CD4-positive, alpha-beta T cell (primary cell): ENCODE measurements at regions of chr16 and their contacts with region 1.

Region 1: GRCh38 chr16:9090960-9091866 is at the start of gene HAPSTR1:
- DNase-seq: peak; percentile 98 to 100 (median 99)
- ATAC-seq: peak; percentile 87
- H3K4me3 ChIP-seq: peak within 1 kb of the TSS; percentile 89
- H3K4me3 Mint-ChIP-seq: peak within 1 kb of the TSS; percentile 96
- H3K27ac ChIP-seq: peak within 1 kb of the TSS; percentile 86 to 90
- H3K27ac Mint-ChIP-seq: peak within 1 kb of the TSS; percentile 97
- H3K4me1 ChIP-seq: peaks cover 22% of the 10 kb centered on the region
- H3K4me1 Mint-ChIP-seq: peaks cover 47% of the 10 kb centered on the region
- H3K27me3 ChIP-seq: no peaks in the 10 kb centered on the region
- H3K27me3 Mint-ChIP-seq: no peaks in the 10 kb centered on the region
- CTCF ChIP-seq: no peak
- total RNA-seq, gene HAPSTR1: 152 to 153 TPM

Region 2: GRCh38 chr16:8674413-8675022 is 416.7 kb before region 1 on chr16 and contains the start of gene ABAT:
- CTCF ChIA-PET with region 1: no interaction called
- POLR2A ChIA-PET with region 1: interaction called, 5 read pairs
- intact Hi-C with region 1: loop called in 1 of 2 experiments (anchors 1 kb)
- DNase-seq: peak; percentile 78 to 93 (median 86)
- ATAC-seq: peak; percentile 96
- H3K4me3 ChIP-seq: peak within 1 kb of the TSS; percentile 92
- H3K4me3 Mint-ChIP-seq: peak within 1 kb of the TSS; percentile 97
- H3K27ac ChIP-seq: peak within 1 kb of the TSS in 1 of 2 donors; percentile 46
- H3K27ac Mint-ChIP-seq: peak within 1 kb of the TSS; percentile 91
- H3K4me1 ChIP-seq: peaks cover 25% of the 10 kb centered on the region
- H3K4me1 Mint-ChIP-seq: peaks cover 24% of the 10 kb centered on the region
- H3K27me3 ChIP-seq: no peaks in the 10 kb centered on the region
- H3K27me3 Mint-ChIP-seq: no peaks in the 10 kb centered on the region
- CTCF ChIP-seq: no peak
- total RNA-seq, gene ABAT: 4.1 to 4.4 TPM

Region 3: GRCh38 chr16:8868416-8869211 is 222.6 kb before region 1 on chr16 and contains the start of gene CARHSP1:
- CTCF ChIA-PET with region 1: no interaction called
- POLR2A ChIA-PET with region 1: interaction called, 52 read pairs
- intact Hi-C with region 1: loop called in 1 of 2 experiments (anchors 5 kb)
- DNase-seq: peak; percentile 62 to 92 (median 76)
- ATAC-seq: peak; percentile 74
- H3K4me3 ChIP-seq: peak within 1 kb of the TSS; percentile 85
- H3K4me3 Mint-ChIP-seq: peak within 1 kb of the TSS; percentile 95
- H3K27ac ChIP-seq: peak within 1 kb of the TSS; percentile 32 to 72
- H3K27ac Mint-ChIP-seq: peak within 1 kb of the TSS; percentile 85
- H3K4me1 ChIP-seq: peaks cover 59% of the 10 kb centered on the region
- H3K4me1 Mint-ChIP-seq: peaks cover 50% of the 10 kb centered on the region
- H3K27me3 ChIP-seq: no peaks in the 10 kb centered on the region
- H3K27me3 Mint-ChIP-seq: no peaks in the 10 kb centered on the region
- CTCF ChIP-seq: no peak
- total RNA-seq, gene CARHSP1: 25.5 to 27.8 TPM

Region 4: DNA sequence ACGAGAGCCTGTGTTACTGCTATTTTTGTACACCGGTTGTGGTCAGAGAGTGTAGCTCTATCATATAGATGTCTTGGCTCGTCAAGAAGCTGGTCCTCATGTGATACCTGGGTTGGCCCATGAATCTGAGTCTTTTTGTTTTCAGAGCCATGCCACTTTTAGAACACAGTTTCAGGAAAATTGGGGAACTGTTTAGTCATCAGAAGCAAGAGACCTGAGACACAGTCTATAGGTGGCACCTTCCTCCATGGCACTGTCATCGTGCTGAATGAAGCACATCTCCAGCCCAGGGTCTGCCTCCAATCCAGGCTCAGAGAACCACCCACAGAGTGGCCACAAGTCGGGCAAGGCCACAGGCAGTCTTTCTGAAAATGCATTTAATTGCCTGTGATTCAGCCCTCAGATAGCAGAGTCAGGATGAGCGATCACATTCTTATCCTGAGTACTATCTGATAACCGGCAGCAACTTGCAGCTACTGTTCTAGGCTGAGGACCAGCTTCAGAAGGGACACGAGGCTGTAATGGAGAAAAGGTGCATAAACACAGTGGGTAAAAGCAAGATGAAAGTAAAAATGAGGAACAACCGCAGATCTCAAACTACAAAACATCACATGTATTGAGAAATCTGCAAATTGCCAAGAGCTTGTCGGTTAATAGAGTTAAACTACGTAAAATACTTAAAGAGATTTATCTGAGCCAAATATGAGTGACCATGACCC is 14.0 kb before region 1 on chr16:
- CTCF ChIA-PET with region 1: no interaction called
- POLR2A ChIA-PET with region 1: interaction called, 42 read pairs
- intact Hi-C with region 1: no loop called
- DNase-seq: peak in 2 of 14 experiments; percentile 11 to 15
- ATAC-seq: no peak
- H3K4me3 ChIP-seq: no peak overlapping the region
- H3K4me3 Mint-ChIP-seq: no peak overlapping the region
- H3K27ac ChIP-seq: no peak overlapping the region
- H3K27ac Mint-ChIP-seq: no peak overlapping the region
- H3K4me1 ChIP-seq: peaks cover 12% of the 10 kb centered on the region
- H3K4me1 Mint-ChIP-seq: peaks cover 12% of the 10 kb centered on the region
- H3K27me3 ChIP-seq: no peaks in the 10 kb centered on the region
- H3K27me3 Mint-ChIP-seq: peaks cover 5% of the 10 kb centered on the region
- CTCF ChIP-seq: no peak

Region 5: DNA sequence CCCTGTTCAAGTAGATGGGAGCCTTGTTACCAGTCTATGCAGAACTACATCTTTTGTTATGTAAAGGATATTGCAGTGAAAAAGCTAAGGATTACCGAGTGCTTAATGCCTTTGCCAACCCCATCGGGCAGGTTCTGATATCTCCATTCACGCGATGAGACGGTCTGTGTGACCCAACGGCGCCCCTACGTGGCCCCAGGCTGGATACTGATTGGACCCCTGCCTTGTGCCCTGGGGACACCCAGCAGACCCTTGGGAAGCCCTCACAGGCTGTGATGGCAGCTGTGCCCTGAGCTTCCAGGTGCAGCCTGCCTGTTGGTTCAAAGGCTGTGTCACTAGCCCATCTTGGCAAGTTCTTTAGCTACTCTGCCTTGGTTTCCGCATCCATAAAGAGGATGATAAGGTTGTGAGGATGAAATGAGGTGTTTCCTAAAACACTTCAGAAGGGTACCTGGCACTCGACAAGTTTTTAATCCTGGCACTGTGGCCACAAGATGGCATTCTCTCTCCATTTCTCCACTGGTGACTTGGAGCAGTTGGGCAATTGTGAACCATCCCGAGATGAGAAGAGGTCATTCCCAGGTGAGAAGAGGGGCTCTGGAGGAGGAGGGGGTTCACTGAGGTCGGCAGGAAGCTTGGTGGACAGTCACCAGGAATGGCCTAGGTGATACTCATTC is 33.8 kb after region 1 on chr16:
- CTCF ChIA-PET with region 1: no interaction called
- POLR2A ChIA-PET with region 1: interaction called, 9 read pairs
- intact Hi-C with region 1: loop called (anchors 5 kb)
- DNase-seq: no peak
- ATAC-seq: no peak
- H3K4me3 ChIP-seq: no peak overlapping the region
- H3K4me3 Mint-ChIP-seq: no peak overlapping the region
- H3K27ac ChIP-seq: peak overlapping the region in 1 of 2 donors; percentile 43
- H3K27ac Mint-ChIP-seq: peak overlapping the region; percentile 75
- H3K4me1 ChIP-seq: peaks cover 42% of the 10 kb centered on the region
- H3K4me1 Mint-ChIP-seq: peaks cover 67% of the 10 kb centered on the region
- H3K27me3 ChIP-seq: no peaks in the 10 kb centered on the region
- H3K27me3 Mint-ChIP-seq: no peaks in the 10 kb centered on the region
- CTCF ChIP-seq: no peak

Region 6: DNA sequence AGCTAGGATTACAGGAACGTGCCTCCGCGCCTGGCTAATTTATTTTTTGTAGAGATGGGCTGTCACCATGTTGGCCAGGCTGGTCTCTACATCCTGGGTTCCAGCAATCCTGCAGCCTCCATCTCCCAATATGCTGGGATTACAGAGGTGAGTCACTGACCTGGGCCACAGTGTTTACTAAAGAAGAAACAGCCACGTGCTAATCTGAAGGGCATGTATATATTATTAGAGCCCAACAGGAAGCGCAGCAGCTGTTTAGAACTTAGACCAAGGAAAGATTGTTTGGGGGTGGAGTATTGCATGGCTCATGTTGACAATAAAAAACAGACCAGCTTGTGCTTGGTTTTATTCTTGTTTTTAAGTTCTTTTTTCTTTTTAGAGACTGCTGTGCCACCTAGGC is 60.4 kb after region 1 on chr16:
- CTCF ChIA-PET with region 1: no interaction called
- POLR2A ChIA-PET with region 1: no interaction called
- intact Hi-C with region 1: no loop called
- DNase-seq: no peak
- ATAC-seq: no peak
- H3K4me3 ChIP-seq: no peak overlapping the region
- H3K4me3 Mint-ChIP-seq: no peak overlapping the region
- H3K27ac ChIP-seq: no peak overlapping the region
- H3K27ac Mint-ChIP-seq: no peak overlapping the region
- H3K4me1 ChIP-seq: no peaks in the 10 kb centered on the region
- H3K4me1 Mint-ChIP-seq: no peaks in the 10 kb centered on the region
- H3K27me3 ChIP-seq: peaks cover 0 to 8% of the 10 kb centered on the region in 2 experiments
- H3K27me3 Mint-ChIP-seq: peaks cover 21% of the 10 kb centered on the region
- CTCF ChIP-seq: no peak

Region 7: DNA sequence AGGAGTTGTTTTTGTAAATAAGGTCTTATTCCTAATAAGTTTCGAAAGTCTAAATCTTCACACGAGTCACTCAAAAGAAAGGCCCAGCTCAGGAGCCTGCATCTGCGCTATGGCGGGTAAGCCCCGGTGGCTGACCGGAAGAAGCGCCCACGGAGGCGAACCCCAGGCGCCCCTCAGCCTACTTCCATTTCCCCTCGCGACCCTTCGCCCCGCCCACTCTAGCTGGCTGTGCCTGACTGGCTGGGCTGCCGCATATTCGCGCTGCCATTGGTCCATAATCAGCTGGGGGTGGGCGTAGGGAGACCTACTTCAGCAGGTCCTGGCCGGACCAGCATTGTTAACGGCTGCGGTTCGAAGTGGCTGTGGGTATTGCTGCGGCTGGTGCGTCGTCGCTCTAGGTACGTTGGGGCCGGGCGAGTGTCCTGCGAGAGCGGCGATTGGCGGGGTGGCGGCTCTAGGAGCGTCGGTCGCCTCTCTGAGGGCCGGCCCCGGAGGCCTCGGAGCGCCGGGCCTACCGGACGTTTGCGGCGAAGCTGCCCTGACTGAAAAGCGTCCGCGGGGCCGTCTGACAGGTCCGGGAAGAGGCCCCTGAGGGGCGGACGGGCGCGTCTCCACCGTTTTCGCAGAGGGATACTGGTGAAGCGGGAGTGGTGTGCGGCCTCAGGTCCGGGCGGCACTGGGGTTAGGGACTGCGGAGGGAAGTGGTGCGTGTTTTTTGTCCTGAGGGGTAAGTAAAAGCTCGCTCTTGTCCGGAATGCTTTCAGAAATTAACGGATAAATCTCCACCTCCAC is 1294.7 kb after region 1 on chr16 and contains the start of gene ATF7IP2:
- CTCF ChIA-PET with region 1: no interaction called
- POLR2A ChIA-PET with region 1: interaction called, 6 read pairs
- intact Hi-C with region 1: loop called in 1 of 2 experiments (anchors 5 kb)
- DNase-seq: peak; percentile 73 to 93 (median 83)
- ATAC-seq: peak; percentile 97
- H3K4me3 ChIP-seq: peak within 1 kb of the TSS; percentile 86
- H3K4me3 Mint-ChIP-seq: peak within 1 kb of the TSS; percentile 100
- H3K27ac ChIP-seq: peak within 1 kb of the TSS; percentile 46 to 69
- H3K27ac Mint-ChIP-seq: peak within 1 kb of the TSS; percentile 91
- H3K4me1 ChIP-seq: peaks cover 30% of the 10 kb centered on the region
- H3K4me1 Mint-ChIP-seq: peaks cover 57% of the 10 kb centered on the region
- H3K27me3 ChIP-seq: no peaks in the 10 kb centered on the region
- H3K27me3 Mint-ChIP-seq: no peaks in the 10 kb centered on the region
- CTCF ChIP-seq: no peak
- total RNA-seq, gene ATF7IP2: 82.9 to 86.9 TPM